Left lung (tissue), 14 donors: ENCODE measurements at regions of chrX and their contacts with region 1.

Region 1: GRCh38 chrX:107776649-107777535 is 641 bp upstream of the NCBP2L start:
- DNase-seq: peak in 3 of 4 donors; percentile 79 to 89 (median 81)
- ATAC-seq: peak; percentile 83
- H3K4me3 ChIP-seq: peak overlapping the region; percentile 28 to 48
- H3K27ac ChIP-seq: peak overlapping the region in 1 of 2 donors; percentile 61
- H3K4me1 ChIP-seq: peaks cover 0 to 6% of the 10 kb centered on the region in 2 donors
- H3K27me3 ChIP-seq: peaks cover 0 to 22% of the 10 kb centered on the region in 2 donors
- CTCF ChIP-seq: peak; percentile 56 to 76

Region 2: GRCh38 chrX:107654872-107655761 is 121.8 kb before region 1 on chrX:
- intact Hi-C with region 1: loop called in 1 of 2 experiments (anchors 5 kb)
- DNase-seq: peak in 3 of 4 donors; percentile 66 to 86 (median 68)
- ATAC-seq: peak; percentile 92
- H3K4me3 ChIP-seq: no peak overlapping the region
- H3K27ac ChIP-seq: peak overlapping the region in 1 of 2 donors; percentile 37
- H3K4me1 ChIP-seq: peaks cover 0 to 12% of the 10 kb centered on the region in 2 donors
- H3K27me3 ChIP-seq: no peaks in the 10 kb centered on the region
- CTCF ChIP-seq: peak; percentile 60 to 65

Region 3: DNA sequence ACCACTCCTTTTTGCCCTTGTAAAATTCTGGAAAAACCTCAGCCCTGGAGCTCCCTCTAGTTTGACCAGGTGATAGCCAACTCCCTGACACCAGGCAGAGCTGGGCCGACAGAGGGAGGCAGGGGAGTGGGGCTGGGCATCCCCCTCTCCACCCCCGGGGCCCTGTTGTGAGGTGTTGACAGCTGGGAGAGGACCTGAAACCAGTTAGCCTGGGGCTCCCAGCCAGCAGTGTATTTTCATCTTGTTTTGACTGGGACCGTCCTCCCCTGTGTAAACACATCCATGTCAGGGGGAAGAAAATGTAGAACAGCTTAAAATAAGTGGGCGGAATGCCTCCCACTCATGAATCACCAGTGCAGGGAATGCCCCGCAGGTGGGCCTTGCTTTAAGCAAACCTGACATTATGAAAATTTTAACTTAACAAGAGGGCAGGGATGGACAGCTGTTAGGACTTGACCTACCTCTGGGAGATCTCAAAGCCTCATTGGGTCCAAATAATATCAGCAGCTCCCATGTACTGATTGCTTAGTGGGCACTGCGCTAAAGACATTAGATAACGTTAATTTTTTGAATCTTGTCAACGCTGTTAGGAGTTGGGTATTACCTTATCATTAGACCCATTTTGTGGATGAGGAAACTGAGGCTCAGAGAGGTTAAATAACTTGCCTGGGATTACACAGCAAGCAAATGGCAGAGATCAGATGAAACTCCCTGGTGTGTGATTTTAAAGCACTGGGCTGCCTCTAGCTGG is 47.2 kb before region 1 on chrX:
- intact Hi-C with region 1: loop called in 1 of 2 experiments (anchors 10 kb)
- DNase-seq: no peak
- ATAC-seq: no peak
- H3K4me3 ChIP-seq: no peak overlapping the region
- H3K27ac ChIP-seq: peak overlapping the region in 1 of 2 donors; percentile 36
- H3K4me1 ChIP-seq: peaks cover 19 to 24% of the 10 kb centered on the region in 2 donors
- H3K27me3 ChIP-seq: no peaks in the 10 kb centered on the region
- CTCF ChIP-seq: no peak